Heart right ventricle (tissue), 16 donors: ENCODE measurements at regions of chr4 and their contacts with region 1.

Region 1: DNA sequence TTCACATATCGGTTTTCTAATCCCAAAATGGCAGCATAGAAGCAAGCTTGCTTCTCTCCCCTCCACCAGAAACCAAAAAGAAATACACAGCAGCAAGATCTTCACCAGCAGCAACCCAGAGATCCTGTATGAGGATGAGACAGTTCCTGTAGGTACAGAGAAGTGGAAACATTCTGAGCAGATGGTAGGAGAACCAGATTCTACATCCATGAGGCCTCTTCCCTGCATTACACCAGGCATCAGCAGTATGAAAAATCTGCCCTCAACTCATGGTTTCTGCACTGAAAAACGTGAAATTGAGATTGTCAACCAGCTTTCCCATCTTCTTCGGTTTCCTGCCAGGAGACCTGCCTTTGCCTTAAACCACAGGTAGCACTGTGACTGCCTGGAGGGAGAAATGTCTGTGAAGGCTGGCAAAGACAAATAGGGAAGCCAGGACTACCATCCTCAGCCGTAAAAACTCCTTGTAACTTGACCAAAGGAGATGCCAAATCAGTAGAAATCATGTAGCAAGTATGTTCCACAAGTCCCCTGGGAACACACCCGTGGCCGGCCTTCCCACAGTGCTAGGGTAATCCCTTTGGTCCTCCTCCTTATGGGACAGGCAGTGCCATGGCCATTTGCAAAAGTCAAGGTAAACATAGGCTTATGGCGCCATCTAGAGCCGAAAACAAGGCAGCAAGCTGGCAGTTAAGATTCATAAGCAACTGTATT is 24.0 kb upstream of the MTHFD2L start:
- DNase-seq: peak; percentile 54 to 85
- ATAC-seq: peak; percentile 81 to 95 (median 92)
- H3K4me3 ChIP-seq: no peak overlapping the region
- H3K27ac ChIP-seq: peak overlapping the region in 2 of 10 donors; percentile 7 to 28
- H3K4me1 ChIP-seq: peaks cover 0 to 8% (median 0%) of the 10 kb centered on the region in 9 donors
- H3K27me3 ChIP-seq: no peaks in the 10 kb centered on the region
- CTCF ChIP-seq: peak; percentile 63 to 92 (median 88)

Region 2: GRCh38 chr4:73161527-73162185 is 972.3 kb before region 1 on chr4:
- intact Hi-C with region 1: no loop called
- DNase-seq: no peak
- ATAC-seq: peak in 6 of 8 donors; percentile 39 to 69 (median 66)
- H3K4me3 ChIP-seq: no peak overlapping the region
- H3K27ac ChIP-seq: peak overlapping the region in 1 of 10 donors; percentile 23
- H3K4me1 ChIP-seq: no peaks in the 10 kb centered on the region
- H3K27me3 ChIP-seq: no peaks in the 10 kb centered on the region
- CTCF ChIP-seq: no peak

Region 3: DNA sequence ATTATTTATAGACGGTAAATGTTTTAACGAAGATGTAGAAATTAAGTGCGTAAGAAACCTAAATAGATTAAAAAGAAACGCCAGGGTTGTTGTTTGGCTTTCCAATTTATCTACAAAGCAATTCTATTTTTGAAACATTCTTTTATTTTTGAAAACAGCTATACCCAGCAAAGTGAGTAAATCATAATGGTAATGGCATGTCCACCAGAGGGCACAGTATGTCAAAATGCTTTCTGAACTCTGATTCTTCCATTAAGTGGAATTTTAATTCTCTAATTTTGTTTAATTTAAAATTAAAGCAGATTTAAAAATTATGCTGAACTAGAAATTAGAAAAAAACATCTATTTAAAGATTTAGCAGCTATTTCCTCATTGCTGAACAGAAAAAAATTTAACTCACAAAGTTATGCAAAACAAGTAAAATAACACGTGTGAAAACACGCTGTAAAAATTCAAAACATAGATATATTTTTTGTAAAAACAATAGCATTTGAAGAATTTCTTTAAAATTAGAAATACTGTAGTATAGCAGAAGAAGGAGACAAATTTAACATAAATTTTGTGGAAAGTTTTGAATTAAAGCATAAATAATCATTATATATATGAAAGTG is 540.2 kb before region 1 on chr4:
- intact Hi-C with region 1: loop called in 6 of 10 experiments (anchors 5 to 10 kb)
- DNase-seq: no peak
- ATAC-seq: no peak
- H3K4me3 ChIP-seq: no peak overlapping the region
- H3K27ac ChIP-seq: no peak overlapping the region
- H3K4me1 ChIP-seq: no peaks in the 10 kb centered on the region
- H3K27me3 ChIP-seq: no peaks in the 10 kb centered on the region
- CTCF ChIP-seq: peak in 7 of 9 donors; percentile 39 to 61 (median 52)

Region 4: GRCh38 chr4:73729534-73730165 is 404.3 kb before region 1 on chr4:
- intact Hi-C with region 1: loop called in 8 of 10 experiments (anchors 2 to 10 kb)
- DNase-seq: peak; percentile 30 to 60
- ATAC-seq: peak; percentile 76 to 91 (median 87)
- H3K4me3 ChIP-seq: no peak overlapping the region
- H3K27ac ChIP-seq: peak overlapping the region in 1 of 10 donors; percentile 83
- H3K4me1 ChIP-seq: peaks cover 0 to 80% (median 32%) of the 10 kb centered on the region in 9 donors
- H3K27me3 ChIP-seq: no peaks in the 10 kb centered on the region
- CTCF ChIP-seq: peak; percentile 62 to 90 (median 83)

Region 5: DNA sequence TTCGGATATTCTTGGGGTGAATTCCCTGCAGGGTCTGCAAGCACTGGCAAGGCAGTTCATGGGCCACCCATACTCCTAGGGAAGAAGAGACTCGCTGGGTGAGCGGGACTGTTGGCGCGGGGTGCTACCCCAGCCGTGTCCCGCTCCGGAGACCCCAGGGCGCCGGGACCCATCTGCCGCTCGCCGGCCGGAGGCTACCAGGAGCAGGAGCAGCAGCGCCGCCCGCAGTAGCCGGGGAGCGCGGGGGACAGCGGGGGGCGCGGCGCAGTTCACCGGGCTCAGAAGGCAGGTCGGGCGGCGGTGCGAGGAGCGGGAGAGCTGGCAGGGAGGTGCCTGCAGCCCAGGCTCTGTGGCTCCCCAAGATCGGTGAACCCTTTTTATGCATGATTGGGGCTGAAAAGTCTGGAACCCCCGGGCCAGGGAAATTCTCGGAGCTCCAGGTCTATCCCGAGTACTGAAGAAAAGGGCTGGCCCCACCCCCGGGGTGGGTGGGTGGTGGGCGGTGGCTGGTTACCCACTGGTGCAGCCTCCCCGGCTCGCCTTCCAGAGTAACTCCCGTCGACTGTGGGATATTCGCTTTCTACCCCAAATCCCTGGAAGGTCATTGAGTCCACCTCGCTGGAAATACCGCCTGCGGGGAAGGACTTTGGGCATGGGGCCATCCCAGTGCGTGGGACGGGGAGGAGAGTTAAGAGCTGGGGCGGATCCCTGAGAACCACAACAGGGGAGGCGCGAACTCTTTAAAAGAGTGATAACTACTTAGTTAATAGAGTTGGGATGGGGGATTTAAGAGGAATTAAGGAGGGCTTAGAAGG is 189.7 kb before region 1 on chr4:
- intact Hi-C with region 1: loop called in 1 of 10 experiments (anchors 10 kb)
- DNase-seq: peak; percentile 9 to 29
- ATAC-seq: peak in 3 of 8 donors; percentile 33 to 48 (median 34)
- H3K4me3 ChIP-seq: peak overlapping the region in 8 of 10 donors; percentile 8 to 47 (median 39)
- H3K27ac ChIP-seq: no peak overlapping the region
- H3K4me1 ChIP-seq: peaks cover 5 to 15% (median 12%) of the 10 kb centered on the region in 9 donors
- H3K27me3 ChIP-seq: peaks cover 6 to 77% (median 50%) of the 10 kb centered on the region in 7 donors
- CTCF ChIP-seq: no peak

Region 6: DNA sequence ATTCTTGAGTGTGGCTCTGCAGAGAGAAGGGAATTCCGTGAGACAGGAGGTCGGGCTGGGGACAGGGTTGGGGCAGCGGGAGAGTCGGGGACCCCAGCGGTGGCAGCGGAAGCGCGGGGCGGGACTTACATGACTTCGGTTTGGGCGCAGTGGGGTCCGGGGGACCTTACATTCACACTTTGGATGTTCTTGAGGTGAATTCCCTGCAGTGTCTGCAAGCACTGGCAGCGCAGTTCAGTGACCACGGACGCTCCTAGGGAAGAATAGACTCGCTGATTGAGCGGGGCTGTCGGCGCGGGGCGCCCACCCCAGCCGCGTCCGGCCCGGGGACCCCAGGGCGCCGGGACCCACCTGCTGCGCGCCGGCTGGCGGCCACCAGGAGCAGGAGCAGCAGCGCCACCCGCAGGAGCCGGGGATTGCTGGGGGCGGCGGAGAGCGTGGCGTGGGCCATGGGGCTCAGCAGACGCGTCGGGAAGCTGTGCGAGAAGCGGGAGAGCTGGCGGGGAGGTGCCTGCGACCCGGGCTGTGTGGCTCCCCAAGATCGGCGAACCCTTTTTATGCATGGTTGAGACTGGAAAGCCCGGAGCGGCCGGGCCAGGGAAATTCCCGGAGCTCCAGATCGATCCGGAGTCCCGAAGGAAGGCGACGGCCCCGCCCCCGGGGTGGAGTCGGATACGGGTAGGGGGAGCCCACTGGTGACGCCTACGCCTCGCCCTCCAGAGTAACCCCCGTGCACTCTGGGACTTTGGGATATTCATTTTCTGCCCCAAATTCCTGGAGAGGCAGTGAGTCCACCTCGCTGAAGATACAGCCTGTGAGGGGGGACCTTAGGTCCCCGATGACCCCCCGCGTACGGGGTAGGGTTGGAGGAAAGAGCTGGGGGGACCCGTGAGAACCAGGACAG is 95.5 kb before region 1 on chr4 and contains the start of gene CXCL3:
- intact Hi-C with region 1: loop called in 3 of 10 experiments (anchors 5 to 10 kb)
- DNase-seq: peak; percentile 79 to 80
- ATAC-seq: peak; percentile 90 to 97 (median 95)
- H3K4me3 ChIP-seq: peak within 1 kb of the TSS; percentile 43 to 78 (median 68)
- H3K27ac ChIP-seq: peak within 1 kb of the TSS; percentile 27 to 94 (median 80)
- H3K4me1 ChIP-seq: peaks cover 0 to 22% (median 5%) of the 10 kb centered on the region in 9 donors
- H3K27me3 ChIP-seq: peaks cover 0 to 16% (median 0%) of the 10 kb centered on the region in 7 donors
- CTCF ChIP-seq: peak; percentile 13 to 65 (median 49)
- total RNA-seq, gene CXCL3: 0.24 to 5.1 (median 1.4) TPM in 9 of 10 donors, not detected in the other

Region 7: GRCh38 chr4:74206088-74206825 is 72.3 kb after region 1 on chr4:
- intact Hi-C with region 1: no loop called
- DNase-seq: no peak
- ATAC-seq: peak in 6 of 8 donors; percentile 24 to 68 (median 56)
- H3K4me3 ChIP-seq: no peak overlapping the region
- H3K27ac ChIP-seq: peak overlapping the region in 5 of 10 donors; percentile 6 to 65 (median 44)
- H3K4me1 ChIP-seq: peaks cover 0 to 24% (median 10%) of the 10 kb centered on the region in 9 donors
- H3K27me3 ChIP-seq: no peaks in the 10 kb centered on the region
- CTCF ChIP-seq: no peak